B cell (primary cell): ENCODE measurements at regions of chr9 and their contacts with region 1.

Region 1: DNA sequence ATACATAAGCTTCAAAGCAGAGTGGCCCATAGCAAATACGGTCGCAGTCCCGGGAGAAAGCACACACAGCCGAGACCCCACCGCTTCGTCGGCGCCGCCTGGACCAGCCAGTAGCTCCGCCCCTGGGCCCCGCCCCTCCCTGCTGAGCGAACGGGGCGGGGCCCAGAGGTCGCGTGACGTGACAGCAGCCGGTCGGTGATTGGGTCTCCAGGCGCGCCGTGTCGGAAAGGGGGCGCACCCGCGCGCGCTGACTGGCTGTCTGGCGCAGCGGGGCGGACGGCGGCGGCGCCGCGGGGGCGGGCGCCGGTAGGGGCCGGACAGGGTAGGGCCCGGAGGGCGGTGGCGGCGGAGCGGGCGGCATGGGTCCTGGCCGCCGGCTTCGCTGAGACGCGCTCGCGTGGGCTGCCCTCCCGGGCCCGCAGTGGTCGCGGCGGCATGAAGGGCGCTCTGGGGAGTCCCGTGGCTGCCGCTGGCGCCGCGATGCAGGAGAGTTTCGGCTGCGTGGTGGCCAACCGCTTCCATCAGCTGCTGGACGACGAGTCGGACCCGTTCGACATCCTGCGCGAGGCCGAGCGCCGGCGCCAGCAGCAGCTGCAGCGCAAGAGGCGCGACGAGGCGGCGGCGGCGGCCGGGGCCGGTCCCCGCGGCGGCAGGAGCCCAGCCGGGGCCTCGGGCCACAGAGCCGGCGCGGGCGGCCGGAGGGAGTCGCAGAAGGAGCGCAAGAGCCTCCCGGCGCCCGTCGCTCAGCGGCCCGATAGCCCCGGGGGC is at the start of gene HABP4:
- DNase-seq: peak; percentile 96
- ATAC-seq: peak; percentile 95
- H3K4me3 ChIP-seq: peak within 1 kb of the TSS; percentile 59 to 74 (median 65)
- H3K4me3 Mint-ChIP-seq: peak within 1 kb of the TSS; percentile 94
- H3K27ac ChIP-seq: no peak within 1 kb of the TSS
- H3K27ac Mint-ChIP-seq: peak within 1 kb of the TSS; percentile 83
- H3K4me1 ChIP-seq: peaks cover 12 to 13% of the 10 kb centered on the region in 2 donors
- H3K4me1 Mint-ChIP-seq: peaks cover 14% of the 10 kb centered on the region
- H3K27me3 ChIP-seq: peaks cover 0 to 8% (median 0%) of the 10 kb centered on the region in 4 experiments
- H3K27me3 Mint-ChIP-seq: peaks cover 7% of the 10 kb centered on the region
- CTCF ChIP-seq: no peak
- total RNA-seq, gene HABP4: 14.1 and 15.0 TPM in 2 replicates

Region 2: DNA sequence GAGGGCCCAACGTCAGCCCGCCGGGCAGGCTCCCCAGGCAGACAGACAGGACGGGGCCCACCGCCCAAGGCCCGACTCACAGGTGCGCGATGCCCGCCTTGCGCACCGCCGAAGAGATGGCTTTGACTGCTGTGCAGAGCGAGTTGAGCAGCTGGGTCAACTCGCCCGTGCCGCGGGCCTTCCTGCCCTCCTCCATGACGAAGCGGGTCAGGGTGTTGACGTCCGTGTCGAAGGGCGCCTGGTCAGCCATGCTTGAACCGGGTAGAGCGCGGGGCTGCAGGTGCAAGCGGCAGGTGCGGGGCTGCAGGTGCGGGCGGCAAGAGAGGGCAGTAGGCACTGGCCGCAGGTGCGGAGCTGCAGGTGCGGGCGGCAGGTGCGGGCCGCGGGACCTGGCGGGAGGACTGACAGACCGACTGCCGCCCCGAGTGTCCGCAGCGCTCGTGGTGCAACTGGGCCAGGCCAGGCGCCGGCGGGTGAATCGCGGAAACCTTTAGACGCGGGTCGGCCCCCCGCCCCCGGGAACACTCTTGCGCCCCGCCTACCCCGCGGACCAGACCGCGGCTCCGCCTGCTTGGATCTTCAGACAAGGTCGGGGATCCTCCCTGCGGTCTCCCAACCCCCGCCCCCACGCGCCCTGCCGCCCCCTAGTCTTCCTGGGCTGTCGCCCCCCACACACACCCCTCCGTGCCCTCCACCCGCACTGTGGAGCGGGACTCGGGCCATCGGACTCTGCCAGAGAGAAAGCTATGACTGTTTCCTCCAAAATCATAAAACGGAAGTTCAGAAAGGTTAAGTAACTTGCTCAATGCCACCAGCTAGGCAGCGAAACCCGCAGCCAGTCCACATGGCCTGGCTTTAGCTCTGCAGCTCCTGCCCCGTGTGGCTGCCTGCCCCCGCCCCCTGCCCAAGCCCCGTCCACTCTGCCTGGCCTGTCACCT is 1810.7 kb before region 1 on chr9 and contains the start of gene FBP1:
- CTCF ChIA-PET with region 1: no interaction called
- POLR2A ChIA-PET with region 1: interaction called, 11 read pairs
- intact Hi-C with region 1: no loop called
- DNase-seq: peak; percentile 88
- ATAC-seq: peak; percentile 81
- H3K4me3 ChIP-seq: peak within 1 kb of the TSS; percentile 41 to 79 (median 66)
- H3K4me3 Mint-ChIP-seq: peak within 1 kb of the TSS; percentile 94
- H3K27ac ChIP-seq: peak within 1 kb of the TSS; percentile 2 to 62
- H3K27ac Mint-ChIP-seq: peak within 1 kb of the TSS; percentile 87
- H3K4me1 ChIP-seq: peaks cover 10 to 18% of the 10 kb centered on the region in 2 donors
- H3K4me1 Mint-ChIP-seq: peaks cover 18% of the 10 kb centered on the region
- H3K27me3 ChIP-seq: peaks cover 0 to 5% (median 2%) of the 10 kb centered on the region in 4 experiments
- H3K27me3 Mint-ChIP-seq: peaks cover 3% of the 10 kb centered on the region
- CTCF ChIP-seq: no peak
- total RNA-seq, gene FBP1: 2.8 and 3.4 TPM in 2 replicates

Region 3: GRCh38 chr9:96460882-96461281 is 10.9 kb after region 1 on chr9:
- CTCF ChIA-PET with region 1: no interaction called
- POLR2A ChIA-PET with region 1: no interaction called
- intact Hi-C with region 1: no loop called
- DNase-seq: no peak
- ATAC-seq: no peak
- H3K4me3 ChIP-seq: no peak overlapping the region
- H3K4me3 Mint-ChIP-seq: no peak overlapping the region
- H3K27ac ChIP-seq: no peak overlapping the region
- H3K27ac Mint-ChIP-seq: no peak overlapping the region
- H3K4me1 ChIP-seq: no peaks in the 10 kb centered on the region
- H3K4me1 Mint-ChIP-seq: no peaks in the 10 kb centered on the region
- H3K27me3 ChIP-seq: no peaks in the 10 kb centered on the region
- H3K27me3 Mint-ChIP-seq: no peaks in the 10 kb centered on the region
- CTCF ChIP-seq: no peak

Region 4: DNA sequence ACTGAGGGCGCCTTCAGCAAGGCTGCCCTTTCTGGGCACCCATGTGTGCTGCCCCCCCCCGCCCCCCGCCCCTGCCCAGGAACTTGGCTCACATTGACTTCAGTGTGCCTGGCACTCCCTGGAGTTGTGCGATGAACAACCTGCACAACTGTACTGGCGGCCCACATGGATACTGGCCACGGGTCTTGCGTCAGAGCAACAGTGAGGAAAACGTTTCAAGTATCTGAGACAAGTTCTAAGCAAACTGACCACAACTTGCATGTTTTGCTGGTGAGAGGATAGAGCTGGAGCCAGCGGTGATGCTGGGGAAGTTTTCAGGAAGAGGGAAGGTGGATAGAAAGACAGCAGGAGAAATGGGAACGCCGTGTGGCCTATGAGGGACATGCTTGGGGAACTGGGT is 45.3 kb after region 1 on chr9:
- CTCF ChIA-PET with region 1: no interaction called
- POLR2A ChIA-PET with region 1: no interaction called
- intact Hi-C with region 1: no loop called
- DNase-seq: no peak
- ATAC-seq: no peak
- H3K4me3 ChIP-seq: no peak overlapping the region
- H3K4me3 Mint-ChIP-seq: no peak overlapping the region
- H3K27ac ChIP-seq: no peak overlapping the region
- H3K27ac Mint-ChIP-seq: no peak overlapping the region
- H3K4me1 ChIP-seq: no peaks in the 10 kb centered on the region
- H3K4me1 Mint-ChIP-seq: no peaks in the 10 kb centered on the region
- H3K27me3 ChIP-seq: no peaks in the 10 kb centered on the region
- H3K27me3 Mint-ChIP-seq: no peaks in the 10 kb centered on the region
- CTCF ChIP-seq: no peak

Region 5: GRCh38 chr9:96626912-96627311 is 176.9 kb after region 1 on chr9:
- CTCF ChIA-PET with region 1: no interaction called
- POLR2A ChIA-PET with region 1: interaction called, 10 read pairs
- intact Hi-C with region 1: no loop called
- DNase-seq: no peak
- ATAC-seq: no peak
- H3K4me3 ChIP-seq: no peak overlapping the region
- H3K4me3 Mint-ChIP-seq: no peak overlapping the region
- H3K27ac ChIP-seq: no peak overlapping the region
- H3K27ac Mint-ChIP-seq: no peak overlapping the region
- H3K4me1 ChIP-seq: no peaks in the 10 kb centered on the region
- H3K4me1 Mint-ChIP-seq: no peaks in the 10 kb centered on the region
- H3K27me3 ChIP-seq: peaks cover 0 to 6% (median 1%) of the 10 kb centered on the region in 4 experiments
- H3K27me3 Mint-ChIP-seq: peaks cover 17% of the 10 kb centered on the region
- CTCF ChIP-seq: no peak